Activated CD4-positive, alpha-beta T cell treated with anti-CD3 and anti-CD28 coated beads for 36 hours (primary cell): ENCODE measurements at regions of chr2 and their contacts with region 1.

Region 1: DNA sequence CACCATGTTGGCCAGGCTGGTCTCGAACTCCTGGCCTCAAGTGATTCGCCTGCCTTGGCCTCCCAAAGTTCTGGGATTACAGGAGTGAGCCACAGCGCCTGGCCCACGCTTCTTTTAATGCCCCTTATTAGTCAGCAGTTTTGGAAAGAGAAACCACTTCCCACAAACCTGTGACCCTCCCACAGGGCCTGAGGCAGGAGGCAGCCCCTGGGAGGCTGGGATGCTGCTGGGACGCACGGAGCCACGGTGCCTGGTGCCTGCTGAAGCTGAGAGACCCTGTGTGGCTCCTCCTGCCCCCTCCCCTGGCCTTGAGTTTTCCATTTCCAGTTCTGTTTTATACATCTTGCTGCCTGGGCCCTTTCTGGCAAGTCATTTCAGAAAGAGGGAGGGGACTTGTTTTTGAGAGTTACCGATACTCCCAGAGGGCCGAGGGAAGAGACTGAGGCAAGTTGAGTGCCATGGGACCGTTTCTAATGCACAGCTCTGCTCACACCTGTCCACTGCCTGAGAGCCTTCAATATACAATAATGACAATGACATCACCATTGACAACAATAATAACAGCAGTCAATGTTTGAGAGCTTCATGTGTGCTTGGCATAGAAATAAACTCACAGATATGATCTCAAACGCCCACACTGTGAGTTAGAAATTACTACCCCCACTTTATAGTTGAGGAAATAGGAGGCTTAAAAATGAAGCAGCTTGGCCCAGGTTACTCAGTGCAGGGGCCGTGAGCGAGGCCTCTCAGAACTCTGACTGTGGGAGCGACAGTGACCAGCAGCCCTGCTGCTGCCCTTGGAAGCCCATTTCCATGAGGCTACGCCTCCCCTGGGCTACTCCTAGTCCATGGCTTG is 78.1 kb upstream of the YWHAQ start:
- DNase-seq: peak; percentile 71
- ATAC-seq: peak; percentile 63
- H3K4me3 Mint-ChIP-seq: peak overlapping the region; percentile 10
- H3K27ac Mint-ChIP-seq: peak overlapping the region; percentile 92
- H3K4me1 Mint-ChIP-seq: peaks cover 56% of the 10 kb centered on the region
- H3K27me3 Mint-ChIP-seq: no peaks in the 10 kb centered on the region

Region 2: DNA sequence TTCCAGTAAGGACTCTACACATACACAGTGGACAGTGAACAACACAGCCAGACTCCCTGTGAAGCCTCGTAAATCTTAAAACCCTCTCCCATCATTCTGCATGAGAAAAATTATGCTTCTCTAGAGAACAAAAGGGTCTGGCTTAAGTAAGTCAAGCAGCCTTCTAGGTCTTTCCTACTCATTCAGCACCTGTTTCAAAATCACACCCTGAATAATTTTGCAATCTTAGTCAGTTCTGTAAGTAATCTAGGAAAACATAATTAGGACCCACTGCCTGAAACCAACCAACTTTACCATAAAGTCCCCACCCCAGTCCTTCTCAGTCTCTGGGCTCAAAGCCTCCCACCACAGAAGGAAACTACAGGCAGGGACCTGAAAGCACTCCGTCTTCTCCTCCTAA is 214.8 kb before region 1 on chr2:
- CTCF ChIA-PET with region 1: no interaction called
- POLR2A ChIA-PET with region 1: interaction called, 4 read pairs
- intact Hi-C with region 1: loop called in 1 of 2 experiments (anchors 5 kb)
- DNase-seq: no peak
- ATAC-seq: peak; percentile 51
- H3K4me3 Mint-ChIP-seq: no peak overlapping the region
- H3K27ac Mint-ChIP-seq: peak overlapping the region; percentile 77
- H3K4me1 Mint-ChIP-seq: peaks cover 40% of the 10 kb centered on the region
- H3K27me3 Mint-ChIP-seq: no peaks in the 10 kb centered on the region

Region 3: DNA sequence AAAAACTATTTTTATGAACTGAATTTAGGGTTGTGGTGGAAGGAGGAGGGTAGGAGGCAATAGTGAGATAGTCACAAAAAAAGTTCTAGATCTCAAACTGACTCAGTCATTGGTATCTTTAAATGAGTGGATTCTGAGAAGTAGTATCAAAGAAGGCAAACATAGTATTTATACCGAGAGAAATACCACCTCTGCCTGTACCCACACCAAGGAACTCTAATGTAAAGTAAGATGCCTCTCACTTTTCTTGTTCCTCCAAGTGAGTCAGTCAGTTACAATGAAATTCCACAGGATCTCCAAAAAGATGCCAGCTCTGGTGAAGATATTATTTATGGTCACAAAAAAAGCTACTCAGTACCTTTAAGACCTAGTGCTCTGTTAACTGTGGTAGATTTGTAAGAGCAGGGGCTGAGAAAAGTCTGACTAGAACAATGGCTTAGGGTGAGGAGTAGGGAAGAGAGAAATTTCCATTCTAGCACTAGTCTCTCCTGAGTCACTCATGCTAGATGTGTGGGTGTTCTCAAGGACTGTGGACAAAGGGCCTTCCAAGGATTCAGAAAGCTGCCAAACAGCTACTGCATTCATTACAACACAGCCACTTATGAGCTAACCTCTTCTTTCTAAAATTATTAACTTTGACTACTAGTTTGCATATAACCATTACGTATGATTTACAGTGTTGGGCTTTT is 114.4 kb before region 1 on chr2:
- CTCF ChIA-PET with region 1: interaction called, 4 read pairs
- POLR2A ChIA-PET with region 1: interaction called, 9 read pairs
- intact Hi-C with region 1: loop called in 1 of 2 experiments (anchors 1 kb)
- DNase-seq: peak; percentile 21
- ATAC-seq: peak; percentile 89
- H3K4me3 Mint-ChIP-seq: no peak overlapping the region
- H3K27ac Mint-ChIP-seq: peak overlapping the region; percentile 82
- H3K4me1 Mint-ChIP-seq: peaks cover 83% of the 10 kb centered on the region
- H3K27me3 Mint-ChIP-seq: no peaks in the 10 kb centered on the region

Region 4: DNA sequence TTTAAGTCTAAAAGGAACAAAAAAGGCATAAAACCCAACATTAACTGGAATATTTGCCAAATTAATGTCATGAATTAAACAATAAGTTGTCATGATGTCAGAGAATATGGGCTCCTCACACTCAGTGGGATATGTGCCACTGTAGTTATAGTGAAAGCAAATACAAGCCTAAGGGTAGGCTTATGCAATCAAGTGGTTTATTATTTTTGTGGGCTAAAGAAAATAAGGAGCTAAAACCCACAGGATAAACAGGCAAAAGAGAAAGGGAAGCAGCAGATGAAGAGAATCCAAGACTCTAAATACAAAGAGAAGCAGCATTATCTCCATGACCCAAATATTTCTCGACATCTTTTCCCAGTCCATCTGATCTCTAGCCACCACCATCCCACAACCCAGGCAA is 95.6 kb before region 1 on chr2:
- CTCF ChIA-PET with region 1: interaction called, 5 read pairs
- POLR2A ChIA-PET with region 1: interaction called, 9 read pairs
- intact Hi-C with region 1: loop called (anchors 1 to 5 kb)
- DNase-seq: no peak
- ATAC-seq: no peak
- H3K4me3 Mint-ChIP-seq: no peak overlapping the region
- H3K27ac Mint-ChIP-seq: peak overlapping the region; percentile 27
- H3K4me1 Mint-ChIP-seq: peaks cover 95% of the 10 kb centered on the region
- H3K27me3 Mint-ChIP-seq: no peaks in the 10 kb centered on the region

Region 5: DNA sequence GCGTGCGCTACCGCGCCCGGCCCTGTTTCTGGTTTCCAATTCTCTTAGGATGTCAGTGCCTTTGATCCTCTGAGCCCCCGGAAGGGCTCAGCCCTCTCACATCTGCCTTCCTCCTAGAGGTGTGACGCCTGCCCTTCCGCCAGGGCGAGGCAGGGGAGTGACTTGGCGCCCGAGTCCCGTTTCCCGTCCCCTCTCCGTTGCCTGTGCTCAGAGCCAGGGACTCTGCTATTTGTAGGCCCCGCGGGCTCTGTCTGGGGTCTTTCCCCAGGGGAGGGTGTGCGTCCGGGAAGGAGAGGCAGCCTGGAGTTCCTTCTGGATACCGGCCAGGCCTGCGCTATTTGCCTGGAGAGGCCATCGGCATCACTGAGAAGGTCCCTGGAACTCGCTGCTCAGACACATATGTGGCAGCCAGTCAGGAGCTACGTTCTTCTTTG is 30.6 kb after region 1 on chr2:
- CTCF ChIA-PET with region 1: interaction called, 3 read pairs
- POLR2A ChIA-PET with region 1: interaction called, 5 read pairs
- intact Hi-C with region 1: loop called in 1 of 2 experiments (anchors 2 kb)
- DNase-seq: peak; percentile 73
- ATAC-seq: peak; percentile 75
- H3K4me3 Mint-ChIP-seq: peak overlapping the region; percentile 65
- H3K27ac Mint-ChIP-seq: peak overlapping the region; percentile 92
- H3K4me1 Mint-ChIP-seq: peaks cover 53% of the 10 kb centered on the region
- H3K27me3 Mint-ChIP-seq: no peaks in the 10 kb centered on the region

Region 6: GRCh38 chr2:10036095-10036884 is 327.4 kb after region 1 on chr2:
- CTCF ChIA-PET with region 1: no interaction called
- POLR2A ChIA-PET with region 1: no interaction called
- intact Hi-C with region 1: no loop called
- DNase-seq: peak; percentile 70
- ATAC-seq: peak; percentile 90
- H3K4me3 Mint-ChIP-seq: no peak overlapping the region
- H3K27ac Mint-ChIP-seq: no peak overlapping the region
- H3K4me1 Mint-ChIP-seq: peaks cover 4% of the 10 kb centered on the region
- H3K27me3 Mint-ChIP-seq: no peaks in the 10 kb centered on the region